Heart left ventricle (tissue), 16 donors: ENCODE measurements at regions of chr18 and their contacts with region 1.

Region 1: GRCh38 chr18:77899972-77900754 is 650.5 kb downstream of the GALR1 start:
- DNase-seq: peak in 2 of 5 donors; percentile 40 to 72
- ATAC-seq: peak; percentile 26 to 94 (median 69)
- H3K4me3 ChIP-seq: peak overlapping the region in 9 of 12 donors; percentile 11 to 51 (median 33)
- H3K27ac ChIP-seq: no peak overlapping the region
- H3K4me1 ChIP-seq: peaks cover 0 to 8% (median 4%) of the 10 kb centered on the region in 12 donors
- H3K27me3 ChIP-seq: peaks cover 0 to 42% (median 10%) of the 10 kb centered on the region in 9 donors
- CTCF ChIP-seq: peak; percentile 50 to 91 (median 66)
- POLR2A ChIP-seq: no peak

Region 2: GRCh38 chr18:79258447-79258846 is 1358.3 kb after region 1 on chr18:
- intact Hi-C with region 1: loop called in 1 of 10 experiments (anchors 10 kb)
- DNase-seq: no peak
- ATAC-seq: peak in 1 of 4 donors; percentile 26
- H3K4me3 ChIP-seq: no peak overlapping the region
- H3K27ac ChIP-seq: no peak overlapping the region
- H3K4me1 ChIP-seq: peaks cover 0 to 2% (median 0%) of the 10 kb centered on the region in 12 donors
- H3K27me3 ChIP-seq: no peaks in the 10 kb centered on the region
- CTCF ChIP-seq: no peak
- POLR2A ChIP-seq: no peak